GM12878 (cell line): ENCODE measurements at regions of chr17 and their contacts with region 1.

Region 1: DNA sequence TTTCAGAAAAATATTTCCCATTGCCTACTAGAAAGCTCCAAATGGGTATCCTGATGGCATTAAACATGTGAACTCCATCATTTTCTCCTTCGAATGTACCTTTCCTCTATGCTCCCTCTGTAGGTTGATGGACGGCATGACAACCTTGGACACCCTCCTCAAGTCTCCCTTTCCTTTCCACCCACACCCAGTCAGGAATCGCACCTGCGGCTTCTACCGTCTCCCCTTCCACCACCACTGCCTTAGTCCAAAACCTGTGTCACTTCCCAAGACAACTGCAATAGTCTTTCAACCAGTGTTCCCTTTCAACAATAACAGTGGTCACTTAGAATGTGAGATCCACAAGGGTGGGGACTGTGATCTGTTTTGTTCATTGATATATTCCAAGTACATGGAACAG is 233.1 kb upstream of the AXIN2 start:
- DNase-seq: no peak
- ATAC-seq: peak; percentile 44; the same call in 1 of the 3 replicates
- H3K4me3 ChIP-seq: no peak overlapping the region
- H3K27ac ChIP-seq: no peak overlapping the region
- H3K4me1 ChIP-seq: no peaks in the 10 kb centered on the region
- H3K27me3 ChIP-seq: no peaks in the 10 kb centered on the region
- CTCF ChIP-seq: peak; percentile 38 to 56 (median 44); a peak in 4 of 6 replicates
- EP300 ChIP-seq: no peak
- POLR2A ChIP-seq: no peak
- RAD21 ChIP-seq: peak; percentile 33; the same call in 1 of the 2 replicates

Region 2: DNA sequence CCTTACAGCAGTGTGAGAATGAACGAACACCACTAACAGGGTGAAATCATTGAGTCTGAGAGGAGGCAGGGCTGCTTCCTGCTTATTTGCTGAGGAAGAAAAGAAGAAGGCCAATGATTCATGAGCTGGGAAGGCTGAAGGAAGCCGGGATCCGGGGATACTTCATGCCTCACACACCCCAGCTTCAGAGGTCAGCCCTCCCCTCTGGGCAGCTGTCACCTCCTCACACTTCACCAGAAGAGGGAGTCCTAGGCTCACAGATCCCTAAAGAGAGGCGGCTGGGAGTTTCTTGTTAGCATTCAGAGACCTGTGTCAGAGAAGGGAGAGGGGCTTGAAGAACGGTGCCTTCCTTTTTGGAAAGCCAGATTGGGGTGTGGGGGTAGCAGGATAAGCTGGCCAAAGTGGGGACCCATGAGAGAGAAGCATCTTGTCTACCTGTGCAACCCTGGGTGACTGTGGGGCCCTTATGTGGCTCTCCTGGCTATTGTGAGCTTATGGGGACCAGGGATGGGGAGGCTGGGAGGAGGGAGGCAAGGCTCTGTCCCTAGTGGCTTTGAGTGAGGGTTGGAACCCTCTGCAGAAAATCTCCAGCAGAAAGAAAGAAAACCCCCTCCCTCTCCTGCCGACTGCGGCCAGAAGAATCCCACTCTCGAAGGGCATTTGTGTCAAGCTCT is 562.8 kb before region 1 on chr17:
- CTCF ChIA-PET with region 1: interaction called, 8 read pairs
- POLR2A ChIA-PET with region 1: no interaction called
- RAD21 ChIA-PET with region 1: interaction called, 4 read pairs
- SMC1A ChIA-PET with region 1: no interaction called
- in situ Hi-C with region 1: no loop called
- intact Hi-C with region 1: loop called (anchors 10 kb)
- DNase-seq: peak; percentile 12
- ATAC-seq: peak; percentile 72
- H3K4me3 ChIP-seq: no peak overlapping the region
- H3K27ac ChIP-seq: no peak overlapping the region
- H3K4me1 ChIP-seq: peaks cover 20% of the 10 kb centered on the region
- H3K27me3 ChIP-seq: no peaks in the 10 kb centered on the region
- CTCF ChIP-seq: peak; percentile 72 to 87 (median 81)
- EP300 ChIP-seq: no peak
- POLR2A ChIP-seq: no peak
- RAD21 ChIP-seq: peak; percentile 94

Region 3: DNA sequence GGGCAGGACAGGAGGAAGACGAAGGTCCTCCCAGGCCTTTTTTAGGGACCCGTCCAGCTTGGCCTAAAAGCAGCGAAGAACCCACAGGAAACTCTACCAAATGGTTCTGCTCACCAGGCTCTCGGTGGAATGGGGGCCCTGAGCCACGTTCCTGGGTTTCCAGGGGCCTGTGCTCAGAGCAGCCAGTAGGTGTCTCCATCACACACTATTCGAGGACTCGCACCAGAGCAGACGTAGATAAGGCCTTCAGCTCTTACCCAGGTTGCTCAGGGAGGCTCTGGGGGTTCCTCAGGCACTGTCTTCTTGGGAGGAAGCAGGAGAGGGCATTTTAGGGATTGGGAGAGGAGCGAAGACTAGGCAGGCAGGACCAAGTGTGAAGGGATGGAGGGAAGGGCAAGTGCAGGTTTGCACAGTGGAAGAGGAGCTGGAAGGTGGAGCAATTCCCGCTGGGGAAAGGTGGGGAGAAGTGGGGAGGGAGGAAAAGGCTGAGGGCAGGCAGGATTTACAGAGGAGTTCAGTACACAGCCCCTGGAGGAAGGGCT is 500.3 kb before region 1 on chr17:
- CTCF ChIA-PET with region 1: interaction called, 30 read pairs
- POLR2A ChIA-PET with region 1: no interaction called
- RAD21 ChIA-PET with region 1: interaction called, 29 read pairs
- SMC1A ChIA-PET with region 1: interaction called, 25 read pairs
- in situ Hi-C with region 1: no loop called
- intact Hi-C with region 1: loop called (anchors 2 kb)
- DNase-seq: no peak
- ATAC-seq: peak; percentile 99
- H3K4me3 ChIP-seq: no peak overlapping the region
- H3K27ac ChIP-seq: no peak overlapping the region
- H3K4me1 ChIP-seq: no peaks in the 10 kb centered on the region
- H3K27me3 ChIP-seq: no peaks in the 10 kb centered on the region
- CTCF ChIP-seq: peak; percentile 82 to 87 (median 85)
- EP300 ChIP-seq: no peak
- POLR2A ChIP-seq: no peak
- RAD21 ChIP-seq: peak; percentile 88

Region 4: GRCh38 chr17:65561394-65562205 is 233.0 kb before region 1 on chr17 and contains the start of gene AXIN2:
- CTCF ChIA-PET with region 1: interaction called, 10 read pairs
- POLR2A ChIA-PET with region 1: no interaction called
- RAD21 ChIA-PET with region 1: interaction called, 17 read pairs
- SMC1A ChIA-PET with region 1: interaction called, 36 read pairs
- in situ Hi-C with region 1: no loop called
- intact Hi-C with region 1: loop called (anchors 10 kb)
- DNase-seq: no peak
- ATAC-seq: peak; percentile 79
- H3K4me3 ChIP-seq: peak within 1 kb of the TSS; percentile 81; the same call in 1 of the 2 replicates
- H3K27ac ChIP-seq: peak within 1 kb of the TSS; percentile 62
- H3K4me1 ChIP-seq: peaks cover 19% of the 10 kb centered on the region
- H3K27me3 ChIP-seq: peaks cover 0 to 5% of the 10 kb centered on the region in 2 experiments; a peak in 2 of 4 replicates
- CTCF ChIP-seq: peak in 2 of 3 experiments; percentile 6 to 38; a peak in 1 of 6 replicates
- EP300 ChIP-seq: no peak
- POLR2A ChIP-seq: no peak
- RAD21 ChIP-seq: no peak
- polyA plus RNA-seq, gene AXIN2: 0.47 to 0.66 TPM

Region 5: DNA sequence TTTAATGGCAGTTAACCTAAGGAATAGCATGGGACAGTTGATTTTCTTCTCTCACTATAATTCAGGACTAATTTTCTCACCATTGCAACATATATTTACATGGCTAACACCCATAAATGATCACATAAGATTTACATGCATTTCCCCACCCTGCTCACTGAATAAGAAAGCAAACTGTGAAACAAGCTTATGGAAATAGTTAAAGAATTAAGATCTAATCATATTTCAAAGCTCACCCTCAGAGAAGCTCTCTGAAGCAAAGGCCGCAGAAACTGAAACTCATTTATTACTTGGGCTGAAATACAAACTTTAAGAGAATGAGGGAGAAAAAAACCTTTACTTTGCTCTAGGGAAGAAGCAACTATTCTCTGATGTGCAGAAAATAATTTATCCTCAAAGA is 14.5 kb before region 1 on chr17:
- CTCF ChIA-PET with region 1: interaction called, 6 read pairs
- POLR2A ChIA-PET with region 1: no interaction called
- RAD21 ChIA-PET with region 1: interaction called, 5 read pairs
- SMC1A ChIA-PET with region 1: interaction called, 23 read pairs
- in situ Hi-C with region 1: no loop called
- intact Hi-C with region 1: no loop called
- DNase-seq: no peak
- ATAC-seq: no peak
- H3K4me3 ChIP-seq: no peak overlapping the region
- H3K27ac ChIP-seq: no peak overlapping the region
- H3K4me1 ChIP-seq: no peaks in the 10 kb centered on the region
- H3K27me3 ChIP-seq: no peaks in the 10 kb centered on the region
- CTCF ChIP-seq: no peak
- EP300 ChIP-seq: no peak
- POLR2A ChIP-seq: no peak
- RAD21 ChIP-seq: no peak

Region 6: GRCh38 chr17:65833214-65833613 is 38.6 kb after region 1 on chr17:
- CTCF ChIA-PET with region 1: no interaction called
- POLR2A ChIA-PET with region 1: no interaction called
- RAD21 ChIA-PET with region 1: no interaction called
- SMC1A ChIA-PET with region 1: no interaction called
- in situ Hi-C with region 1: no loop called
- intact Hi-C with region 1: no loop called
- DNase-seq: no peak
- ATAC-seq: no peak
- H3K4me3 ChIP-seq: no peak overlapping the region
- H3K27ac ChIP-seq: no peak overlapping the region
- H3K4me1 ChIP-seq: no peaks in the 10 kb centered on the region
- H3K27me3 ChIP-seq: no peaks in the 10 kb centered on the region
- CTCF ChIP-seq: no peak
- EP300 ChIP-seq: no peak
- POLR2A ChIP-seq: no peak
- RAD21 ChIP-seq: no peak

Region 7: GRCh38 chr17:66098040-66098439 is 303.5 kb after region 1 on chr17:
- CTCF ChIA-PET with region 1: no interaction called
- POLR2A ChIA-PET with region 1: no interaction called
- RAD21 ChIA-PET with region 1: no interaction called
- SMC1A ChIA-PET with region 1: no interaction called
- in situ Hi-C with region 1: no loop called
- intact Hi-C with region 1: no loop called
- DNase-seq: no peak
- ATAC-seq: no peak
- H3K4me3 ChIP-seq: no peak overlapping the region
- H3K27ac ChIP-seq: no peak overlapping the region
- H3K4me1 ChIP-seq: no peaks in the 10 kb centered on the region
- H3K27me3 ChIP-seq: no peaks in the 10 kb centered on the region
- CTCF ChIP-seq: no peak
- EP300 ChIP-seq: no peak
- POLR2A ChIP-seq: no peak
- RAD21 ChIP-seq: no peak

Region 8: GRCh38 chr17:66165513-66166123 is 371.0 kb after region 1 on chr17:
- CTCF ChIA-PET with region 1: interaction called, 11 read pairs
- POLR2A ChIA-PET with region 1: no interaction called
- RAD21 ChIA-PET with region 1: interaction called, 3 read pairs
- SMC1A ChIA-PET with region 1: interaction called, 9 read pairs
- in situ Hi-C with region 1: no loop called
- intact Hi-C with region 1: no loop called
- DNase-seq: peak; percentile 5
- ATAC-seq: peak; percentile 53; the same call in 2 of the 3 replicates
- H3K4me3 ChIP-seq: no peak overlapping the region
- H3K27ac ChIP-seq: no peak overlapping the region
- H3K4me1 ChIP-seq: no peaks in the 10 kb centered on the region
- H3K27me3 ChIP-seq: no peaks in the 10 kb centered on the region; a peak in 1 of 4 replicates
- CTCF ChIP-seq: peak; percentile 54 to 73 (median 56); a peak in 5 of 6 replicates
- EP300 ChIP-seq: no peak
- POLR2A ChIP-seq: no peak
- RAD21 ChIP-seq: peak; percentile 91